Cardiac septum (tissue), 1 donor: ENCODE measurements at regions of chr2 and their contacts with region 1.

Region 1: GRCh38 chr2:216974321-216975302 is 114.7 kb upstream of the TNP1 start:
- DNase-seq: no peak

Region 2: DNA sequence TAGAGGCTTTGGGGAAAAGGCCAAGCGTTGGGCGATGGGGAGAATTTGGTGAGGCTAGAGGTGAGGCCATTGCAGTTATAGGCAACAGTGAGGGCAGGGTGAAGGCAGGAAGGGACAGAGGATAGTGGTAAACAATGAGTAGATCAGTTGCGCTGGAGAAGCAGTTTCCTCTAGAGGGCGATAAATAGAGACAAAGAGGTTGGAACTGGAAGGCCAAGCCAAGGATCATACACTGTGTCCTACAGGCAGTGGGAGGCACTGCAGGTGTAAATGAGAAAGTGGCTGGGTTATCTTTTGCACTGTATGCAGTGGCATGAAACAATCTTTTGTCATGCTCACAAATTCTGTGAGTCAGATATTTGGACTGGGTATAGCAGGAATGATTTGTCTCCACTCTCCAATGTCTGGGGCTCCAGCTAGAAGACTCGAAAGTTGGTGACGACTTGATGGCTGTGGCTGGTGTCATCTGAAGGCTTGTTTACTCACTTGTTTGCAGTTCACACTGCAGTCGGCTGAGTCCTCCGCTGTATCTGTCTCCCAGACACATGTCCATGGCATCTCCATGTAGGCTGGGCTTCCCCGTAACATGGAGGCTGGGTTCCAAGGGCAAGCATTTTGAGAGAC is 196.8 kb before region 1 on chr2:
- intact Hi-C with region 1: no loop called
- DNase-seq: no peak

Region 3: GRCh38 chr2:216792222-216793021 is 182.2 kb before region 1 on chr2:
- intact Hi-C with region 1: loop called (anchors 10 kb)
- DNase-seq: no peak